Psoas muscle (tissue), 8 donors: ENCODE measurements at regions of chr12 and their contacts with region 1.

Region 1: DNA sequence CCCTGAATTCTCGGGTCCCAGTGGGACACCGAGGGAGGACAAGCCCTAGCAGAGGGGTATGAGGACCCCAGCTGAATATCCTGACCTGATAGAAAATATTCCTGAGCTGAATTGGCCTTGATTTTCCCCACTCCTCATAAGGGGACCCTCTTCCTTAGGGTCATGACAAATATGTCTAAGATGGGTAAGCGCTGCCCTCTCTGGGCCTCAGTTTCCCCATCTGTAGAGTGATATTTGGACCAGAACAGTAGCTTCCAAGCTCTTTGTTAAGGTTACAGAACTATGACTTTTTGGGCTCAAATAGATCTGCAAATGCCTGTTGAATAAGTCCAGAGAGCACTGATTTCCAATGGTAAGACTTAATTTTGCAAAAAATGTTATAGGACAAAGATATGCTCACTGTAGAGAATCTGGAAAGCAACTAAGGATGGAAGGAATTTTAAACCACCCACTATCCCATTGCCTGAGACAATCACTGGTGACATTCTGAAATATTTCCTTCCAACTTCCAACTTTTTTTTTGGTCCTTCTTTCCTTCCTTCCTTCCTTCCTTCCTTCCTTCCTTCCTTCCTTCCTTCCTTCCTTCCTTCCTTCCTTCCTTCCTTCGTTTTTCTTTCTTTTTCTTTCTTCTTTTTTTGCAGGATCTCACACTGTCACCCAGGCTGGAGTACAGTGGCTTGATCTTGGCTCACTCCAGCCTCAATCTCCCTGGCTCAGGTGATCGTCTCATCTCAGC is 32.0 kb downstream of the MYL2 start:
- DNase-seq: no peak
- ATAC-seq: no peak
- H3K4me3 ChIP-seq: peak overlapping the region; percentile 61
- H3K27ac ChIP-seq: no peak overlapping the region
- H3K4me1 ChIP-seq: no peaks in the 10 kb centered on the region
- H3K27me3 ChIP-seq: no peaks in the 10 kb centered on the region
- CTCF ChIP-seq: no peak

Region 2: DNA sequence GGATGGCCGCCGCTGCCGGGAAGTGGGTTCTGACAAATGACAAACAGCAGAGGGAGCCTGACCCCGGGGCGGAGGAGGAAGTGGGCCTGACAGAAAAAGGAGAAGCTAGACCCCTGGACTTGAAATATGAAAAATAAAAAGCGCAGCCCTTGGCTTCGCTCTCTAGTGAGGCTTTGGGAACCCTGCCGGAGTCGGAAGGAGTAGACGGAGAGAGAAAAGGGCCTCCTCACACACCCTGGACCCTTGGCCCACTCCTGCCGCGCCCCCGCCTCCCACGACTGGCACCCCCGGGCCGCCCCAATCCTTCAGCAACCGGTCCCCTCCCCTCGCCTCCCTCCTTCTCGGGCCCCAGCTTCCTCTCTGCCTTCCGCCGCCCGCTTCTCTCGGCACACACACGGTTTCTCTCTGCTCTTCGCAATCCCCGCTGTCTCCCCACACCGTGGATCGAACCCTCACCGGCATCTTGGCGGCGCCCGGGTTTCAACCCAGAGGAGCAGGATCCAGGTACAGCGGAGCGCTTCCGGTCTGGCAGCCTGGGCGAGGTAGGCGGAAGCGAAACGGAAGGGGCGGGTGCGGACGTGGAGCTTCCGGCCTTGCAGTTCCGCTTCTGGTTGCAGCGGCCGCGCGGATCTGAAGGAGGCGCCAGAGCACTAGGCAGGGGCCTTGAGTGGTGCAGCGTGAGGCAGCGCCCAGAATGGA is 438.5 kb before region 1 on chr12 and contains the start of gene ARPC3:
- intact Hi-C with region 1: loop called in 1 of 2 experiments (anchors 10 kb)
- DNase-seq: peak; percentile 95 to 97
- ATAC-seq: peak; percentile 99
- H3K4me3 ChIP-seq: peak within 1 kb of the TSS; percentile 88
- H3K27ac ChIP-seq: peak within 1 kb of the TSS; percentile 89
- H3K4me1 ChIP-seq: peaks cover 9% of the 10 kb centered on the region
- H3K27me3 ChIP-seq: no peaks in the 10 kb centered on the region
- CTCF ChIP-seq: peak; percentile 92
- total RNA-seq, gene ARPC3: 52.7 to 71.6 (median 59.7) TPM

Region 3: GRCh38 chr12:110639336-110640141 is 248.9 kb before region 1 on chr12:
- intact Hi-C with region 1: loop called in 1 of 2 experiments (anchors 10 kb)
- DNase-seq: no peak
- ATAC-seq: peak; percentile 29 to 69 (median 54)
- H3K4me3 ChIP-seq: peak overlapping the region; percentile 33
- H3K27ac ChIP-seq: peak overlapping the region; percentile 23
- H3K4me1 ChIP-seq: peaks cover 23% of the 10 kb centered on the region
- H3K27me3 ChIP-seq: no peaks in the 10 kb centered on the region
- CTCF ChIP-seq: no peak

Region 4: GRCh38 chr12:110742718-110743570 is 145.5 kb before region 1 on chr12 and contains the start of gene PPP1CC:
- intact Hi-C with region 1: loop called in 1 of 2 experiments (anchors 2 kb)
- DNase-seq: peak; percentile 93 to 96
- ATAC-seq: peak; percentile 93 to 98 (median 98)
- H3K4me3 ChIP-seq: peak within 1 kb of the TSS; percentile 81
- H3K27ac ChIP-seq: peak within 1 kb of the TSS; percentile 90
- H3K4me1 ChIP-seq: peaks cover 50% of the 10 kb centered on the region
- H3K27me3 ChIP-seq: no peaks in the 10 kb centered on the region
- CTCF ChIP-seq: no peak
- total RNA-seq, gene PPP1CC: 102 to 184 (median 135) TPM

Region 5: GRCh38 chr12:110846615-110847566 is 41.5 kb before region 1 on chr12 and contains the start of gene CCDC63:
- intact Hi-C with region 1: loop called in 1 of 2 experiments (anchors 5 kb)
- DNase-seq: peak; percentile 49 to 71
- ATAC-seq: peak in 3 of 4 donors; percentile 26 to 74 (median 69)
- H3K4me3 ChIP-seq: peak within 1 kb of the TSS; percentile 50
- H3K27ac ChIP-seq: no peak within 1 kb of the TSS
- H3K4me1 ChIP-seq: peaks cover 4% of the 10 kb centered on the region
- H3K27me3 ChIP-seq: peaks cover 0 to 17% (median 11%) of the 10 kb centered on the region in 3 donors
- CTCF ChIP-seq: peak; percentile 38
- total RNA-seq, gene CCDC63: not detected

Region 6: GRCh38 chr12:111211910-111212757 is 323.7 kb after region 1 on chr12:
- intact Hi-C with region 1: no loop called
- DNase-seq: no peak
- ATAC-seq: no peak
- H3K4me3 ChIP-seq: no peak overlapping the region
- H3K27ac ChIP-seq: no peak overlapping the region
- H3K4me1 ChIP-seq: no peaks in the 10 kb centered on the region
- H3K27me3 ChIP-seq: peaks cover 0 to 29% (median 3%) of the 10 kb centered on the region in 3 donors
- CTCF ChIP-seq: no peak

Region 7: GRCh38 chr12:111368291-111368787 is 479.9 kb after region 1 on chr12:
- intact Hi-C with region 1: no loop called
- DNase-seq: peak in 1 of 2 donors; percentile 30
- ATAC-seq: peak in 3 of 4 donors; percentile 2 to 26 (median 16)
- H3K4me3 ChIP-seq: peak overlapping the region; percentile 95
- H3K27ac ChIP-seq: peak overlapping the region; percentile 74
- H3K4me1 ChIP-seq: peaks cover 16% of the 10 kb centered on the region
- H3K27me3 ChIP-seq: no peaks in the 10 kb centered on the region
- CTCF ChIP-seq: no peak